ENCODE measurements at regions of chr10 and their contacts with region 1.

Region 1: DNA sequence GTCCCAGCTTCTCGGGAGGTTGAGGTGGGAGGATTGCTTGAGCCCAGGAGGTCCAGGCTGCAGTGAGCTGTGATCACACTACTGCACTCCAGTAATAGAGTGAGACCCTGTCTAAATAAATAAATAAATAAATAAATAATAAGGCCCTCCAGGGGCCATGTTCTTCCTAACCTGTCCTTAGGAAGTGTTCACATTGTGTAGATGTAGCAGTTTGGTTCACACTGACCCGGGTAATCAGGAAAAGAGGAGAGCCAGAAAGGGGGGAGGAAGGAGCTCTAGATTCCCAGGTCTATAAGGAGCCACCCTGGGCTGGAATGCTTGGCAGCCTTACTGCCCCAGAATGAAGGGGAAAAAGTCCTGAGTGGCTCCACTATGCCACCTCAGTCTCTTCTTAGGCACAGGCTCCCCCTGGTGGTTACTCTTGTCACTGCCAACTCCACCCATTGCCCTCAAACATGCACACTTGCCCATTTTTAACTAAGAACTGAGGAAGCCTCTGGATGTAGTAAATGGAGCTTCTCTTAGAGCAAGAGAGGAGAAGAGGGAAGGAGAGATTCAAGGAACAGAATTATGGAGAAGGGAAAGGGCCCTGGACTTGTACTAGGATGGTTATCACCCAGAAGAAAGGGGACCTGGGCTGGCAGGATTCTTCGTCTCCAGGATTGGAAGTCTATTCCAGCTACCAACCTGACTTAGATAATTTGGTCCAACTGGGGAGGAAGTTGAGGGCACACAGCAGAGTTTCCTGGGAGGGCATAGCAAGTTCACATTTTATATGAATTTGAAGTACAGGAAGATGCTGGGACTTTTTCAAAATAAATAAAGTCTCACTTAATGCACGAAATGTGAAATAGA is 7.8 kb downstream of the HPS6 start:
- DNase-seq: peak; percentile 87
- H3K4me3 ChIP-seq: no peak overlapping the region
- H3K27ac ChIP-seq: no peak overlapping the region
- H3K4me1 ChIP-seq: no peaks in the 10 kb centered on the region
- H3K27me3 ChIP-seq: no peaks in the 10 kb centered on the region
- CTCF ChIP-seq: peak; percentile 97

Region 2: GRCh38 chr10:101161494-101162299 is 911.2 kb before region 1 on chr10:
- CTCF ChIA-PET with region 1: no interaction called
- POLR2A ChIA-PET with region 1: no interaction called
- intact Hi-C with region 1: loop called (anchors 10 kb)
- DNase-seq: peak; percentile 84
- H3K4me3 ChIP-seq: peak overlapping the region; percentile 32
- H3K27ac ChIP-seq: no peak overlapping the region
- H3K4me1 ChIP-seq: peaks cover 13% of the 10 kb centered on the region
- H3K27me3 ChIP-seq: no peaks in the 10 kb centered on the region
- CTCF ChIP-seq: peak; percentile 98

Region 3: GRCh38 chr10:101602761-101603398 is 470.0 kb before region 1 on chr10:
- CTCF ChIA-PET with region 1: interaction called, 3 read pairs
- POLR2A ChIA-PET with region 1: no interaction called
- intact Hi-C with region 1: loop called (anchors 5 kb)
- DNase-seq: peak; percentile 85
- H3K4me3 ChIP-seq: no peak overlapping the region
- H3K27ac ChIP-seq: no peak overlapping the region
- H3K4me1 ChIP-seq: no peaks in the 10 kb centered on the region
- H3K27me3 ChIP-seq: no peaks in the 10 kb centered on the region
- CTCF ChIP-seq: peak; percentile 94

Region 4: GRCh38 chr10:101889256-101890210 is 183.4 kb before region 1 on chr10:
- CTCF ChIA-PET with region 1: interaction called, 3 read pairs
- POLR2A ChIA-PET with region 1: no interaction called
- intact Hi-C with region 1: loop called (anchors 1 kb)
- DNase-seq: peak; percentile 83
- H3K4me3 ChIP-seq: no peak overlapping the region
- H3K27ac ChIP-seq: no peak overlapping the region
- H3K4me1 ChIP-seq: no peaks in the 10 kb centered on the region
- H3K27me3 ChIP-seq: no peaks in the 10 kb centered on the region
- CTCF ChIP-seq: peak; percentile 94

Region 5: DNA sequence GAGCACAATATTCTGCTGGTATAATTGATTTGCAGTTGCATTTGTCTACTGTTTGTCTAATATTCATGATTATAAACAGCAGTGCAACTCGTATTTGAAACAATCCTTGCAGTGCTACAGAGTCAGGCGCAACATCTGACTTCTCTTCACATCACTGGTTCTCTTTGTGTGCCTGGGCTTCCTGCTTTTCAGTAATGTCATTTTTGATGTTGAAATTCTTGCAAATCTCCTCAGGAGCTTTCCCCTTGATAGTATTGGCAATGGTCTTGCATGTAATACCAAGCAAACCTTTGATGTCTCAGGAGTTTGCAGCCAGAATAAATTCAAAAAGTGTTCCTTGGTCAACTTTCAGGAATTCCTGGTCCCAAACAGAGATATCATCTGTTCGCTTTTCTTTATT is 12.4 kb after region 1 on chr10:
- CTCF ChIA-PET with region 1: interaction called, 13 read pairs
- POLR2A ChIA-PET with region 1: no interaction called
- intact Hi-C with region 1: no loop called
- DNase-seq: no peak
- H3K4me3 ChIP-seq: no peak overlapping the region
- H3K27ac ChIP-seq: no peak overlapping the region
- H3K4me1 ChIP-seq: no peaks in the 10 kb centered on the region
- H3K27me3 ChIP-seq: no peaks in the 10 kb centered on the region
- CTCF ChIP-seq: no peak

Region 6: DNA sequence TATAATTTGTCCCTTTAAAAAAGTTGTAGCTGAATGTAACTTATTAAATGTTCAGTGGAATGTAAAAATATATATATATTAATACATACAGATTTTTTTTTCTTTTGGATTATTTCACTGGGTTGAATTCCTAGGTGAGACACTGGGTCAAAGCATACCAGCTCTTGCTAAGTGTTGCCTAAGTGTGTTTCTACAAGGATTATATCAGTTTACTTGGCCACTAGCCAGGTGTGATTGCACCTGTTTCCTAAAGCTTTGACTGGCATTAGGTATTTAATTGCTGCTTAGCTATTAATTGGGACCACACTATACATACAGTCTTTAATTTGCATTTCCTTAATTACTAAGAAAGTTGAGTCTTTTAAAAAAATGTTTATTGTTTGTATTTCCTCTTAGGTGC is 147.7 kb after region 1 on chr10:
- CTCF ChIA-PET with region 1: no interaction called
- POLR2A ChIA-PET with region 1: no interaction called
- intact Hi-C with region 1: no loop called
- DNase-seq: no peak
- H3K4me3 ChIP-seq: no peak overlapping the region
- H3K27ac ChIP-seq: no peak overlapping the region
- H3K4me1 ChIP-seq: peaks cover 8% of the 10 kb centered on the region
- H3K27me3 ChIP-seq: no peaks in the 10 kb centered on the region
- CTCF ChIP-seq: no peak

Region 7: GRCh38 chr10:102998005-102998404 is 925.1 kb after region 1 on chr10:
- CTCF ChIA-PET with region 1: no interaction called
- POLR2A ChIA-PET with region 1: no interaction called
- intact Hi-C with region 1: no loop called
- DNase-seq: no peak
- H3K4me3 ChIP-seq: no peak overlapping the region
- H3K27ac ChIP-seq: no peak overlapping the region
- H3K4me1 ChIP-seq: no peaks in the 10 kb centered on the region
- H3K27me3 ChIP-seq: no peaks in the 10 kb centered on the region
- CTCF ChIP-seq: no peak